ENCODE measurements at regions of chr21 and their contacts with region 1.

Region 1: DNA sequence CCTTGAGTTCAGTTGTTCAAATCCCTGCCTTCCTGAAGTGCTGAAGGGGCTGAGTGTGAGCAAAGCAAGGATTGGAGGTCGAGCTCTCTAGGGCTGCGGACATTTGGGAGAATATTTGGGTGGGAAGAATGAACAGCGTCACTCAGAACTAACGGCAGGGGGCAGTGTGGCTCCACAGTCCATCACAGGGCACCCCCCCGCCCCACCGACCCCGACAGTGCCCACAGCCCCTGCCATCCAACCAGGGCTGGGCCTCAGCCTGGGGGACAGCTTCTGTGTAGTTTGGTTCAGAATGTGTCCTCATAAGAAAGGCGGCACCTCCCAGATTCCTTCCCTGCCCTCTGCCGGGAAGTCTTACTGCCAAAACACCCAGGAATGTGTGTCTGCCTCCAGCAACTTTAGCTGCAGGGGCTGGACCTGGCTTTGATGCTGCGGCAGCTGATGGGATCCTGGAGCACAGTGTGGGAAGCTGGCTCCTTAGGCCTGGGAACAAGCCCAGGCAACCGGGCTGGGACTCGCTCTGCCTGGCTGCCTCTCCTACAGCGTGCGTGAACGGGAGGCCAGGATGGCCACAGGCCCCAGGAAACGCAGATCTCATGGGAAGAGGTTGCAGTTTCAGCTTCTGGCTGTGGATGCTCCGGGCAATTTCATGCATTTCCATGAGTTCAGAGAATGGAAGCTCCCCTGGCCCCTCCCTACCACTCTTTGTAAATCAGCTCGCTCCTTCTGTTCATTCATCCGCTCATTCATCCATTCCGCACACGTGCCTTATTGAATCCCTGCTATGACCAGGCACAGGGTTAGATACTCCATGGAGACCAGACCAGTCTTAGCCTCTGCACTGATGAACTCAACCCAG is 104.9 kb upstream of the TMPRSS2 start:
- DNase-seq: peak; percentile 64 to 77 (median 70)
- ATAC-seq: peak; percentile 76
- H3K4me3 ChIP-seq: no peak overlapping the region
- H3K4me1 ChIP-seq: peaks cover 12% of the 10 kb centered on the region
- CTCF ChIP-seq: no peak

Region 2: GRCh38 chr21:41768437-41769061 is 155.6 kb after region 1 on chr21:
- intact Hi-C with region 1: loop called in 1 of 2 experiments (anchors 10 kb)
- DNase-seq: peak; percentile 86 to 88 (median 87)
- ATAC-seq: peak; percentile 74
- H3K4me3 ChIP-seq: no peak overlapping the region
- H3K4me1 ChIP-seq: peaks cover 13% of the 10 kb centered on the region
- CTCF ChIP-seq: no peak

Region 3: GRCh38 chr21:41777951-41778874 is 165.3 kb after region 1 on chr21:
- intact Hi-C with region 1: loop called in 1 of 2 experiments (anchors 5 kb)
- DNase-seq: peak in 2 of 3 donors; percentile 92 to 96
- ATAC-seq: peak; percentile 77
- H3K4me3 ChIP-seq: no peak overlapping the region
- H3K4me1 ChIP-seq: peaks cover 10% of the 10 kb centered on the region
- CTCF ChIP-seq: peak; percentile 94

Region 4: DNA sequence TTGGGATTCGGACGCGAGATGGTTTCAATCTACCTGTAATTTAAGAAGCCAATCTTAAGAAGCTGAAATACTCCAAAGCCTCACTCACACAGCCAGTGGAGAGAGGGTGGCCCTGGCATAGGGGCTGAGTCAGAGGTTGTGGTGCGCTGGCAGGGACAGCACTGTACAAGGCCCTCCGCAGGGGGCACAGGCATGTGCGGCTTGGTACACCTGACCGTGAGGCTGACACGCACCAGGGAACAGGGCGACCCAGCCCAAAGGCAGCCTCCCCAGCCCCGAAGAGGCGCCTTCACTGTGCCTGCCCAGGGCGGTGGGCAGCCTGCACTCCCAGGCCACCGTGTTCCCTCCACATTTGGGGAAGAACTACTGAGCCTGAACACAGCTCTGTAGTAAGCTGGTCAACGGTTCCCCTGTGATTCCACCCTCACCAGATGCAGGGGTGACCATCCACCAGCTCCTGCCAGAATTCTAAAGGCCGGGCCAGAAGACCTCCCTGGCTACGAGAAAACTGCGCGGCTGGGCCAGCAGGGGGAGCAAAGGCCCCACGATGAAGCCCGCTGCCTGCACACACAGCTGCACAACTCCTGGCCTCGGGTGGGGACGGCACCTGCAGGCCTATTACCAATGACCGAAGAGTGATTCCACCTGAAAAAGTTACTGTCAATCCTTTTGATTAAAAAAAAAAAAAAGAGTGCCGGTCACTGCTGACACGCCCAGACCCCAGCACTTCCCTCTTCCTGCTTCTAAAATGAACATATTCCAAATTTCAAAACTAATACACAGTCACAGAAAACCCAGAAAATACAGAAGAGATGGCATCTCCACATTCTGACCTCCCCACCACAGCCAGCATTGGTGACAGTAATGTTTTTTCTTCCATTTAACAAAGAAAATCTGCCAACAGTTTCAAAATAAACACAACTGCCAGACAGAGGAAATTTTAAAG is 203.6 kb after region 1 on chr21:
- intact Hi-C with region 1: loop called in 1 of 2 experiments (anchors 2 kb)
- DNase-seq: peak in 2 of 3 donors; percentile 71 to 77
- ATAC-seq: peak; percentile 86
- H3K4me3 ChIP-seq: no peak overlapping the region
- H3K4me1 ChIP-seq: peaks cover 2% of the 10 kb centered on the region
- CTCF ChIP-seq: peak; percentile 70

Region 5: GRCh38 chr21:41851090-41851780 is 238.3 kb after region 1 on chr21:
- intact Hi-C with region 1: no loop called
- DNase-seq: no peak
- ATAC-seq: no peak
- H3K4me3 ChIP-seq: no peak overlapping the region
- H3K4me1 ChIP-seq: no peaks in the 10 kb centered on the region
- CTCF ChIP-seq: no peak

Measured in mucosa of descending colon (tissue), 3 donors.